ENCODE measurements at regions of chr1 and their contacts with region 1.

Region 1: DNA sequence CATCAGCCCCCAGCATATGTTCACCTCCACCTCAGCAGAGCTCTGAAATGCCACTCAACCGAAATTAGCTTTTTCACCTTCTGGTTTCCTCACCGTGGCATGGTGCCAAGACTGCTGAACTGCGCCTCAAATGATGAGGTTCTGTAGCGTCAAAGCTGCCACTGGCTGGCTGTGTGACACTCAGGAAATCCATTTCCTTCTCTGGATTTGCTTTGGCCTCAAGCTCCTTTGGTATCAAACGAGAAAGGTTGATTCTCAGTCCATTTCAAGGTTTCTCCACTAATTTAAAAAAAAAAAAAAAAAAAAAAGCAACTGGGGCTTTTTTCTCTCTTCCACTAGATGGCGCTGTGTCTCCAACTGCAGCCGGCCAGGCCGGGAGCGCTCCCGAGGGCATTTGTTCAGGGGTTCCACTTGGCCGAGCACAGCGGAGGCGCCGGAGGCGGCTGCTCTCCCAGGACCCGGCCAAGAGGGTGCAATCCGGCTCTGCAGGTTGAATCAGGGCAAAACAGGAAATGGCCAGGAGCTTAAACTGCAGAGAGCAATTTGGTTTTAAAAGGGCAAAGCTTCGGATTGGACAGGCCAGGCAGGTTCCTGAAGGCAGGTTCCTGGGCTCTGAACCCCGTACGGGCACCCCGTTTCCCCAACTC is 26.5 kb upstream of the PLA2G2C start:
- DNase-seq: peak; percentile 48 to 50
- ATAC-seq: peak; percentile 76 to 87
- H3K4me3 ChIP-seq: no peak overlapping the region
- H3K27ac ChIP-seq: peak overlapping the region; percentile 87 to 91
- H3K4me1 ChIP-seq: peaks cover 34% of the 10 kb centered on the region
- CTCF ChIP-seq: peak; percentile 86
- EP300 ChIP-seq: no peak
- POLR2A ChIP-seq: no peak
- RAD21 ChIP-seq: peak; percentile 69 to 82

Region 2: GRCh38 chr1:20058531-20058930 is 154.3 kb before region 1 on chr1:
- CTCF ChIA-PET with region 1: no interaction called
- POLR2A ChIA-PET with region 1: no interaction called
- DNase-seq: no peak
- ATAC-seq: no peak
- H3K4me3 ChIP-seq: no peak overlapping the region
- H3K27ac ChIP-seq: no peak overlapping the region
- H3K4me1 ChIP-seq: no peaks in the 10 kb centered on the region
- CTCF ChIP-seq: no peak
- EP300 ChIP-seq: no peak
- POLR2A ChIP-seq: no peak
- RAD21 ChIP-seq: no peak

Region 3: DNA sequence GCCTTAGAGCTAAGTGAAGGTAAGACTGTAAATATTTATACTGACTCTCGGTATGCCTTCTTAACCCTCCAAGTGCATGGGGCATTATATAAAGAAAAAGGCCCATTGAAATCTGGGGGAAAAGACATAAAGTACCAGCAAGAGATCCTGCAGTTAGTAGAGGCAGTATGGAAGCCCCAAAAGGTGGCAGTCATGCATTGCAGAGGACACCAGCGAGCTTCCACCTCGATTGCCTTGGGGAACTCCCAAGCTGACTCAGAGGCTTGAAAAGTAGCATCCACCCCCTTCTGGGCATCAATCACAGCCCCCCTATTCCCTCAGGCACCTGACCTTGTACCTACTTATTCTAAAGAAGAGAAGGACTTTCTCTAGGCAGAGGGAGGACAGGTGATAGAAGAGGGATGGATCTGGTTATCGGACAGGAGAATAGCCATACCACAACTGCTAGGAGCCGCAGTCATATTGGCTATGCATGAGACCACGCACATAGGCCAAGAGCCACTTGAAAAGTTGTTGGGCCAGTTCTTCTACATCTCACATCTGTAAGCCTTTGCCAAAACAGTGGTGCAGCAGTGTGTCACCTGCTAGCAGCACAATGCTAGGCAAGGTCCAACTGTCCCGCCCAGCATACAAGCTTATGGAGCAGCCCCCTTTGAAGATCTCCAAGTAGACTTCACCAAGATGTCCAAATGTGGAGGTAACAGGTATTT is 54.3 kb before region 1 on chr1:
- CTCF ChIA-PET with region 1: interaction called, 10 read pairs
- POLR2A ChIA-PET with region 1: no interaction called
- DNase-seq: no peak
- ATAC-seq: no peak
- H3K4me3 ChIP-seq: no peak overlapping the region
- H3K27ac ChIP-seq: no peak overlapping the region
- H3K4me1 ChIP-seq: 0 out of 3 replicates have a peak, but pooled peaks cover 3% of the 10 kb centered on the region
- CTCF ChIP-seq: 0 out of 3 replicates have a peak, but pooled peaks have one; percentile 9
- EP300 ChIP-seq: no peak
- POLR2A ChIP-seq: no peak
- RAD21 ChIP-seq: peak in 1 of 2 experiments; percentile 12; a peak in 2 of 5 replicates

Region 4: DNA sequence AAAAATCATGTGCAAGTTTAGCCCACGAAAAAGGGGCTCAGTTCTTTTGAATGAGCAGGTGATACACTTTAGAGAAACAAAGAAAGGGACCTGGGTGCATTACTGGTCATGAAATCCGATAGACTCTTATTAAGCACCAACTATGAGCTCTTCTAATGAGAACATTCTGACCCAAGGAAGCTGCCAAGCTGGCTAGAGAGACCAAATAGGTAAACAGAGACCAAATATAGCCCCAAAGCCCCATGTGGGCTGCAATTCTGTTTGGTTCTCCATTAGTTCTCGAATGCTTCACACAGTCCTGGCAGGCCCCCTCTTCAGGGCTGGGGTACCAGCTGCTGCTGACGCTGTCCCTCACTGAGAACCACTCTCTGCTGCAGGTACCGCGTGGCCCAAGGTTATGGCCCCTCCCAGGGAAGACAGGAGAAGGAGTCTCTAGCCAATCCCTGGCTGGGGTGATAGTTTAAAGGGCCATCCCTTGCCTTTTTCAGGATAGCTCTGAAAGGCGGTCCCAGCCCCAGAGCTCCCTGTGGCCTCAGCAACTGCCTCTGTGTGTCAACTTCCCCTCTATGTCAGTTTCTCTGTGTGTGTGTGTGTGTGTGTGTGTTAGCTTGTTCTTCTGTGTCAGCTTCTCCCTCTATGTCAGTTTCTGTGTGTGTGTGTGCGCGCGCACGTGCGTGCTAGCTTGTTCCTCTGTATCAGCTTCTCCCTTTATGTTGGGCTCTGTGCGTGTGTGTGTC is 34.0 kb before region 1 on chr1:
- CTCF ChIA-PET with region 1: no interaction called
- POLR2A ChIA-PET with region 1: no interaction called
- DNase-seq: no peak
- ATAC-seq: no peak
- H3K4me3 ChIP-seq: no peak overlapping the region
- H3K27ac ChIP-seq: no peak overlapping the region
- H3K4me1 ChIP-seq: 0 out of 3 replicates have a peak, but pooled peaks cover 2% of the 10 kb centered on the region
- CTCF ChIP-seq: no peak
- EP300 ChIP-seq: no peak
- POLR2A ChIP-seq: no peak
- RAD21 ChIP-seq: no peak

Region 5: DNA sequence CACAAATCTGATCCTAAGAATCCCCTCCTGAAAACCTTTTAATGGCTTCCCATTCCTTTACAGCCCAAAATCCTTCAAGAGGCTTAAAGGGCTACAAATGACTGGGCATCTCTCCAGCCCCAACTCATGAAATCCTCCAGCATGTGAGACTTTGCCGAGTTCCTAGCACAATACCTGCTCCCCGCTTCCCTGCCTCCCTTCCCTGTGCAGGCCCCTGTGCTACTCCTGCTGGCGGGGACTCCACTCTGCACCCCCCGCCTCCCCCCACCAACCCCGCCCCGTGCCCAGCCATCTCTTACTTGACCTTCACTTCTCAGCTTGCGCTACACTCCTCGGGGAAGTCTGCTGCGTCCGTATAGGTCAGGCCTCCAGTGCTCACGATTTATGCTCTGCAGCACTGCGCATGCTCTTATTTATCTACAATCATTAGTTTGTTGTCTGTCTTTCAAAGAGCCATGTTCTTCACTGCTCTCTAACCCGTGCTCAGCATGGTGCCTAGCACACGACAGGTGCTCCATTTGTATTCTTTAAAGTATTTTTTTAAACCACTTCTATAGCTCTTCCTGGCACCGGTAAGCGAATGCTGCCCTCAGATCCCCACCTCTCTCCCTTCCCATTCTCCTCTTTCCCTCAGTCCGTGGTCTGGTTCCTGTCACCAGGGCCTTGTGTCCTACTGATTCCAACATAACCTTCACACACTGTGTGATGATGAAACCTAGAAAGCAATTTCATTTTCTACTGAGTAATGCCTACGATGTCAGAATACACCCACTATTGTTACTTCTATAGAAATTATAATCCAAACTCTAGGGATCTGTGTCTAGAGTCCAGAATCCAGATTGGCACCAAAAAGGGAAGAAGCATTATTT is 11.0 kb after region 1 on chr1:
- CTCF ChIA-PET with region 1: interaction called, 32 read pairs
- POLR2A ChIA-PET with region 1: no interaction called
- DNase-seq: no peak
- ATAC-seq: no peak
- H3K4me3 ChIP-seq: no peak overlapping the region
- H3K27ac ChIP-seq: no peak overlapping the region
- H3K4me1 ChIP-seq: no peaks in the 10 kb centered on the region
- CTCF ChIP-seq: no peak
- EP300 ChIP-seq: no peak
- POLR2A ChIP-seq: no peak
- RAD21 ChIP-seq: no peak

Region 6: GRCh38 chr1:20361806-20362640 is 149.2 kb after region 1 on chr1:
- CTCF ChIA-PET with region 1: interaction called, 13 read pairs
- POLR2A ChIA-PET with region 1: no interaction called
- DNase-seq: peak; percentile 49 to 51
- ATAC-seq: peak; percentile 32 to 80; a peak in 3 of 6 replicates
- H3K4me3 ChIP-seq: no peak overlapping the region
- H3K27ac ChIP-seq: no peak overlapping the region
- H3K4me1 ChIP-seq: peaks cover 18% of the 10 kb centered on the region
- CTCF ChIP-seq: peak; percentile 60
- EP300 ChIP-seq: no peak
- POLR2A ChIP-seq: no peak
- RAD21 ChIP-seq: peak; percentile 68 to 74

Region 7: DNA sequence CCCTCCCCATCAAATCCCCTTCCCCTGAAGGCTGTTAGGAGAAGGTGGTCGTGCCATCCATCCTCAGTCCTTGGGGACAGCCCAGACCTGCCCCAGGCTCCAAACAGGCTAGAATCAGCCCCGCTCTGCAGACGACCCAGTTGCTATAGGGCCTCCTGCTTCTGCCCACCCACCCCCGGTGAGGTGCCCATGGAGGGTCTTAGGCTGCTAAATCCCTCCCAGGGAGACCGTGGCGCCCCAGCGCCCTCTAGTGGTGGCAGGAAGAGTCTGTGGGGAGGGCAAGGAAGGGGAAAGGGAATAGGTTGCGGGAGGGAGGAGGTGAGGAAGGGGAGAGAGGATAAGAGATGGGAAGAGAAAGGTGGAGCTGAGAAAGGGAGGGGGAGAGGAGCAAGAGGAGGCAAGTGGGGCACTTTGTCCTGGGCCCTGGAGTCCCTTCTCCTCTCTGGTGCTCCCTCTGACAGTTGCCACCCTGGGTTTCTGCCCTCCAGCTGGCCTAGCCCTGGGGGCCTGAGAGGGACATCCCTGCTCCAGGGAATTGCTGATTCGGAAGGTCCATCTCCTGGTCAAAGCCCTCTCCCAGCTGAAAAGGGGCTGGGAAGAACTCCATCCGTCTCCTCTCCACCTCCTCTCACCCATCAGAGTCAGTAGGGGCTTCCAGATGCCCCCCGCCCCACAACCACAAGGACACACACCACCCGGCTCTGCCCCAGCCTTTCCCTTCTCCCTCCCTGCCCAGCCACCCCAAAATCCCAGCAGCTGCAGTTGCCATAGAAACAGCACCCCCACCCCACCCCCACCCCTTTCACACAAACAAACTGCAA is 217.8 kb after region 1 on chr1:
- CTCF ChIA-PET with region 1: interaction called, 28 read pairs
- POLR2A ChIA-PET with region 1: no interaction called
- DNase-seq: peak; percentile 23 to 39
- ATAC-seq: peak; percentile 55 to 87; a peak in 3 of 6 replicates
- H3K4me3 ChIP-seq: no peak overlapping the region
- H3K27ac ChIP-seq: peak overlapping the region; percentile 35 to 61; a peak in 3 of 6 replicates
- H3K4me1 ChIP-seq: peaks cover 11% of the 10 kb centered on the region
- CTCF ChIP-seq: peak; percentile 64
- EP300 ChIP-seq: no peak
- POLR2A ChIP-seq: no peak
- RAD21 ChIP-seq: peak; percentile 80 to 83

Measured in A549 (cell line).